ENCODE measurements at regions of chr7 and their contacts with region 1.

Region 1: DNA sequence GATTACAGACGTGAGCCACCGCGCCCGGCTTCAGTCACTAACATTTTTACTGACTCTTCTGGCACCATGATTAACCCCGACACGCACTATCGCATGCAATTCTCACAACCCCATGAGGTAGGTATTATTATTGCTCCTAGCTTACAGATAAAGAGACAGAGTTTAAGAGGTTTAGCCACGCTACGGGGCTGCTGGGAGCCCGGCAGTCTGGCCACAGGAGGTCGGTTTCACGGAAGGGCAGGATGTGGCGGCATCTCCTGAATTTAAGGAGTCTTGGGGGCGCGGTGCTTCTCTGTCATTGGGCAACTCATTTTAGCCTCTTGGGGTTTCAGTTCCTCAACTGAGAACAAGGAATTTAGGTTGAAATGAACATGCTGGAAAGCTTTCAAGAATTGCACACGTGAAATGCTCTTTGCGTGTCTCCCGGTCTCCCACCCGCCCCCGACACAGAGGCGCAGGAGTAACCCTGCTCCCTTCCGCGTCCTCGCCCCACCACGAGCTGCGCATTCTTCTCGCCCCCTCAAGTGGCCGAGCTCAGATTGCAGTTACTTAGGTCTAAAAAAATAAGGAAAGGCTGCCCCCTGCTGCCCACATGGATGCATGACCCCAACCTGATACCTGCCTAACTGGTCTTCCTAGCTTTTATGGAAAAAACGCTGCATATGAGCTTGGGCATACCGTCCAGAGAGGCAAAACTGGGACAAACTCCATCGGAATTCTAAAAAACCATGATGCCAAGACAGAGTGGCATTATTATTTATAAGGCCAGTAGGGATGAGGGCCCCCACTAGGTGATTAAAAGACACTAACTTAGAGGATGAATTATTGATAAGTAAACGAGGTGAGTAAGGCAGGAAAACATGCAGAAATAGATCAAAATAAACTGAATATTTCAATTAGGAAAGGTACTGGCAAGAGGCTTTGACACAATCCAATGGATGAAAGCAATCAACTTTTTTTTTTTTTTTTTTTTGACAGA is 12.4 kb downstream of the PRSS2 start:
- DNase-seq: peak; percentile 89
- ATAC-seq: peak; percentile 98
- H3K4me3 ChIP-seq: peak overlapping the region; percentile 40
- H3K27ac ChIP-seq: no peak overlapping the region
- H3K4me1 ChIP-seq: no peaks in the 10 kb centered on the region
- H3K27me3 ChIP-seq: peaks cover 11% of the 10 kb centered on the region
- CTCF ChIP-seq: peak; percentile 100
- POLR2A ChIP-seq: no peak
- RAD21 ChIP-seq: peak; percentile 95

Region 2: DNA sequence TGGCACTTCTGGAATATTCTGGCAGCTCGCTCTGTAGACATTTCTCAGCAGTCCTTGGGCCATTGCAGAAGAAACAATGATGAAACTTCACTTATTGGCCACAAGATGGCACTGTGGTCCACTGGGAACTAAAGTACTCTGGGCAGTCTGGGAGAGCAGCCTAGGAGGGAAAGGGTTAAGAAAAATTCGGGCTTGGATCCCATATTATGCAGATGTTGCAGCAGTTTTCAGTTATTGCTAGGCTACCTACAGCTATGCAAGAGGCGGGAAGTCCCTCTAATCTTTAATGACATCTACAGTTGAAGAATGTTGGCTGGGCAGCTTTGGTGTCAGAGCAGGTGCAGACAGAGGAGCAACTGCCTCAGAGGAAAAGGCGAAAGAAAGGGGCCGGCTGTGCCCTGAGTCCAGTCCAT is 323.7 kb before region 1 on chr7:
- CTCF ChIA-PET with region 1: interaction called, 6 read pairs
- POLR2A ChIA-PET with region 1: no interaction called
- dilution Hi-C with region 1: no loop called
- in situ Hi-C with region 1: no loop called
- intact Hi-C with region 1: loop called (anchors 1 kb)
- DNase-seq: peak; percentile 90
- ATAC-seq: peak; percentile 50
- H3K4me3 ChIP-seq: no peak overlapping the region
- H3K27ac ChIP-seq: no peak overlapping the region
- H3K4me1 ChIP-seq: peaks cover 22% of the 10 kb centered on the region
- H3K27me3 ChIP-seq: no peaks in the 10 kb centered on the region
- CTCF ChIP-seq: peak; percentile 78
- POLR2A ChIP-seq: no peak
- RAD21 ChIP-seq: peak; percentile 78

Region 3: GRCh38 chr7:142516038-142516501 is 267.1 kb before region 1 on chr7:
- CTCF ChIA-PET with region 1: interaction called, 5 read pairs
- POLR2A ChIA-PET with region 1: no interaction called
- dilution Hi-C with region 1: loop called (anchors 25 kb)
- in situ Hi-C with region 1: no loop called
- intact Hi-C with region 1: loop called (anchors 1 kb)
- DNase-seq: peak; percentile 72
- ATAC-seq: peak; percentile 93
- H3K4me3 ChIP-seq: no peak overlapping the region
- H3K27ac ChIP-seq: no peak overlapping the region
- H3K4me1 ChIP-seq: no peaks in the 10 kb centered on the region
- H3K27me3 ChIP-seq: peaks cover 4% of the 10 kb centered on the region
- CTCF ChIP-seq: peak; percentile 86
- POLR2A ChIP-seq: no peak
- RAD21 ChIP-seq: peak; percentile 75

Region 4: GRCh38 chr7:142603870-142604448 is 179.3 kb before region 1 on chr7:
- CTCF ChIA-PET with region 1: interaction called, 12 read pairs
- POLR2A ChIA-PET with region 1: no interaction called
- dilution Hi-C with region 1: no loop called
- in situ Hi-C with region 1: loop called (anchors 10 kb)
- intact Hi-C with region 1: loop called (anchors 1 kb)
- DNase-seq: peak; percentile 63
- ATAC-seq: peak; percentile 73
- H3K4me3 ChIP-seq: peak overlapping the region; percentile 39; the same call in 1 of the 2 replicates
- H3K27ac ChIP-seq: no peak overlapping the region
- H3K4me1 ChIP-seq: no peaks in the 10 kb centered on the region
- H3K27me3 ChIP-seq: 0 out of 2 replicates have a peak, but pooled peaks cover 3% of the 10 kb centered on the region
- CTCF ChIP-seq: peak; percentile 87
- POLR2A ChIP-seq: no peak
- RAD21 ChIP-seq: peak; percentile 82

Region 5: GRCh38 chr7:142992464-142992863 is 209.3 kb after region 1 on chr7:
- CTCF ChIA-PET with region 1: no interaction called
- POLR2A ChIA-PET with region 1: no interaction called
- dilution Hi-C with region 1: no loop called
- in situ Hi-C with region 1: no loop called
- intact Hi-C with region 1: no loop called
- DNase-seq: no peak
- ATAC-seq: no peak
- H3K4me3 ChIP-seq: no peak overlapping the region
- H3K27ac ChIP-seq: no peak overlapping the region
- H3K4me1 ChIP-seq: no peaks in the 10 kb centered on the region
- H3K27me3 ChIP-seq: no peaks in the 10 kb centered on the region
- CTCF ChIP-seq: no peak
- POLR2A ChIP-seq: no peak
- RAD21 ChIP-seq: no peak